Left colon (tissue), 2 donors: ENCODE measurements at regions of chr1 and their contacts with region 1.

Region 1: GRCh38 chr1:36576118-36576517 is 93.4 kb upstream of the CSF3R start:
- DNase-seq: peak in 1 of 2 donors; percentile 45
- ATAC-seq: peak; percentile 51

Region 2: GRCh38 chr1:37423810-37424209 is 847.7 kb after region 1 on chr1:
- intact Hi-C with region 1: loop called in 1 of 2 experiments (anchors 10 kb)
- DNase-seq: no peak
- ATAC-seq: no peak

Region 3: GRCh38 chr1:37434292-37434907 is 858.3 kb after region 1 on chr1:
- intact Hi-C with region 1: loop called (anchors 5 to 10 kb)
- DNase-seq: peak in 1 of 2 donors; percentile 74
- ATAC-seq: peak; percentile 81